ENCODE measurements at regions of chr16 and their contacts with region 1.

Region 1: DNA sequence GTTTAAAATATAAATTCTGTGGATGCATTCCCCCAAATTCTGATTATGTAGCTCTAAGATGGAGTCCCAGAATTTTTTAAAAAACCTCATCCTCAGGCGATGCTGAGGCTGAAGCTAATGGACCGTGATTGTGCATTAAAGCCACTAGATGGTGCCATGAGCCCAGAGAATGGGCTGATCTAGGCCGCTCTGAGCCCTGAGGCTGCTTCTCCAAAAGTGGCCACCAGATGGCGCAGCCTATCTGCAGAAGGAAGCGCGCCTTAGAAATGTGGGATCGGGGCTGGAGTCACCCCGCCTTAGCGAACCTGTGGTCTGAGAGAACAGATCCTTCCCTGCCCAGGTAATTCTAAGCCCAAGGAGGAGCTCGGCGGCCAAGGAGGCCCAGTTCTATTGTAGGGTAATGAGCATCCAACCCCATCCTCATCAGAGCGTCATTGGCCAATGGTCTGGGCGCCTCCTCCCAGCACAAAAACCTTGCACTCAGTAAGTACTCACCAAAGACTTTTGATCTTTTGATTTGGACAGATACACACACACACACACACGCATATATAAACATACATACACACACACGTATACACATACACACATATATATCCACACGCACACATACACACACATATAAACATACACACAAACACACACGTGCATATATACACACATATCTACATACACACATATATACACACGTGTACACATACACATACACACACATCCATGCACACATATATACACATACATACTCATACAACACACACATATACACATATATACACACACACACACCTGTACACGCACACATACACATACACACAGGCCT is 13.7 kb upstream of the MMP2 start:
- DNase-seq: peak; percentile 64 to 79
- ATAC-seq: peak; percentile 83 to 96
- H3K4me3 ChIP-seq: no peak overlapping the region
- H3K27ac ChIP-seq: no peak overlapping the region
- H3K4me1 ChIP-seq: no peaks in the 10 kb centered on the region
- H3K27me3 ChIP-seq: no peaks in the 10 kb centered on the region
- CTCF ChIP-seq: peak; percentile 97 to 100 (median 99)
- POLR2A ChIP-seq: no peak

Region 2: DNA sequence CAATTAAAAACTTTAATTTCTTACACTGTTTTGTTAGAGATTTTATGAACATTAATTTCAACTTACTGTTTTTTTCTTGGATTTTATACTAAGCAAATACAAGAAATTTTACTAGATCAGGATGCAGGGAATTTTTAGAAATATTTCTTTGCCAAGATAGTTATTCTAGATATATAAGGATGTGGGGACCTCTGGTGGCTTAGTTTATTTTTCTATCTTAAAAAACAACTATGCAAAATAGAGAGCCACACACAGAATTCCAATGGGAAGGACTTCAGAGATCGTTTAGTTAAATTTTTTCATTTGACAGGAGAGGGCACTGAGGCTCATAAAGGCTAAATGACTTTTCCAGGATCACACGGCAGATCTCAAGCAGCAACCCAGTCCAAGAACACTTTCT is 78.2 kb after region 1 on chr16:
- in situ Hi-C with region 1: loop called in 3 of 4 experiments (anchors 5 to 10 kb)
- intact Hi-C with region 1: loop called (anchors 1 kb)
- DNase-seq: no peak
- ATAC-seq: no peak
- H3K4me3 ChIP-seq: no peak overlapping the region
- H3K27ac ChIP-seq: no peak overlapping the region
- H3K4me1 ChIP-seq: peaks cover 0 to 4% of the 10 kb centered on the region in 2 donors
- H3K27me3 ChIP-seq: no peaks in the 10 kb centered on the region
- CTCF ChIP-seq: peak in 4 of 5 experiments; percentile 19 to 39 (median 35)
- POLR2A ChIP-seq: no peak

Region 3: DNA sequence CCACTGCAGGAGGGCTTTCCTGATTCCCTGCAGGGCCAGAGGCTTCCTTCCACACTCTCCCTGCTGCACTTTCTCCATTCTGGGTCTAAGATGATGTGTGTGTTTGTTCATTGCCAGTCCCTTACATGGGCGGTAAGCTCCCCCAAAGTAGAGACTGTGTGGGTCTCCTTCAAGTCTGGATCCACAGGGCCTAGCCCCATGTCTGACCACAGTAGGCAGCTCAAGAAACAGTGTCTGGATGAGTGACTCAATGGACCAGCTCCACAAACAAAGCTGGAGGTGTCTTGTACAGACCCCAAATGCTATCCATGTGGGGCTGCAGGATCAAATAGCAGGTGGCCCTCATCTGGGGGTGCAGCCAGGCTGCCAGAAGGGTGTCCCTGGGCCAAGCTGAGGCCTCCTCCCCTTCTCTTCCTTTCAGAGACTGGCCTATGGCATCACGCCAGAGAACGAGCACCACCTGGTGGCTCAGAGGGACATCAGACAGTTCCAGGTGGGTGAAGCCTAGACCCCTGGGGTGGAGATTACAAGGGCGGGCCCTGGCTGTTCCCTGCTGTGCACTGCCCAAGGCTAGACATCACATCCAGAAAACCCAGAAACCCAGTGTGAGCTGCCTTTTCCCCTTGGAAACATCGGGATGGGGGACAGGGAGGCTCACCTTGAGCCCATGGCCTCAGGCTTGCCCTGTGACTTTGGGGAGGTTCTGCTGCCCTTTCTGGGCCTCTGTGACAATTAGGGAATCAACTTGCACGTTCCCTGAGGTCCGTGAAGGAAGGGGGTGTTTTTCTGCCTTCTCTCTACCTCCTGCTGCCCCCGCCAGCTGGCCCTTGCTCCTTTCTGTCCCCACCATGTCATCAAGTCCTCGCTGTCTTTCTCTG is 236.4 kb after region 1 on chr16:
- in situ Hi-C with region 1: loop called (anchors 5 to 10 kb)
- intact Hi-C with region 1: loop called (anchors 1 kb)
- DNase-seq: peak; percentile 7 to 35
- ATAC-seq: peak; percentile 58 to 70
- H3K4me3 ChIP-seq: no peak overlapping the region
- H3K27ac ChIP-seq: no peak overlapping the region
- H3K4me1 ChIP-seq: no peaks in the 10 kb centered on the region
- H3K27me3 ChIP-seq: no peaks in the 10 kb centered on the region
- CTCF ChIP-seq: peak; percentile 57 to 76 (median 68)
- POLR2A ChIP-seq: no peak

Region 4: DNA sequence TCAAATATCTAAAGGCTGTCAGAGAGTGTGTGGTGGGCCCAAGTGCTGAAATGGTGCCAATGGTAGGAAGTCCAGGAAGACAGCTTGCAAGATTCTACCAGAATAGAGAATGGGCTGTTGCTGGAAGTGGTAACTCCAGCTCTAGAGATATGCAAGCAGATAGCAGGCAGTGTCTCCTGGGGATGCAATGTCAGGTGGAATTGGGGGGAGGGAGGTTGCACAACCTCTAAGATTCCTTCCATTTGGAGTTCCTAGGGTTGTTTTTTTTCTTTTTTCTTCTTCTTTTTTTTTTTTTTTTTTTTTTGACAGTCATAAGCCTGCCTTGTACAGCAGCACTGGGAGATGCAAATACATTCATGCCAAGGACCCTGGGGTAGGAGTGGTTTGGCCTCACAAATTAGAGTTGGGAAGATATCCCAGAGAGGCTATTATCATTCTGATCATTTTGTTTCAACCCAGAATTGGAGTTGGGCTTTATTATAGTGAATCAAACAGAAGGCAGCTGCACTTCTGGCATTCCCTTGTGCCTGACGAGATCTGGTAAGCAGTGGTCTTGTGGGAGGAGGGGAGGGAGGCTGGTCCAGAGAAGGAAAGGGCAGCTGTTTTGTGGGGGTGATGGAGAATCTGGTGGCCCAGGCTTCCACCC is 241.6 kb after region 1 on chr16:
- in situ Hi-C with region 1: loop called (anchors 5 to 10 kb)
- intact Hi-C with region 1: loop called (anchors 1 kb)
- DNase-seq: no peak
- ATAC-seq: peak in 1 of 2 donors; percentile 50
- H3K4me3 ChIP-seq: no peak overlapping the region
- H3K27ac ChIP-seq: no peak overlapping the region
- H3K4me1 ChIP-seq: no peaks in the 10 kb centered on the region
- H3K27me3 ChIP-seq: no peaks in the 10 kb centered on the region
- CTCF ChIP-seq: no peak
- POLR2A ChIP-seq: no peak

Region 5: DNA sequence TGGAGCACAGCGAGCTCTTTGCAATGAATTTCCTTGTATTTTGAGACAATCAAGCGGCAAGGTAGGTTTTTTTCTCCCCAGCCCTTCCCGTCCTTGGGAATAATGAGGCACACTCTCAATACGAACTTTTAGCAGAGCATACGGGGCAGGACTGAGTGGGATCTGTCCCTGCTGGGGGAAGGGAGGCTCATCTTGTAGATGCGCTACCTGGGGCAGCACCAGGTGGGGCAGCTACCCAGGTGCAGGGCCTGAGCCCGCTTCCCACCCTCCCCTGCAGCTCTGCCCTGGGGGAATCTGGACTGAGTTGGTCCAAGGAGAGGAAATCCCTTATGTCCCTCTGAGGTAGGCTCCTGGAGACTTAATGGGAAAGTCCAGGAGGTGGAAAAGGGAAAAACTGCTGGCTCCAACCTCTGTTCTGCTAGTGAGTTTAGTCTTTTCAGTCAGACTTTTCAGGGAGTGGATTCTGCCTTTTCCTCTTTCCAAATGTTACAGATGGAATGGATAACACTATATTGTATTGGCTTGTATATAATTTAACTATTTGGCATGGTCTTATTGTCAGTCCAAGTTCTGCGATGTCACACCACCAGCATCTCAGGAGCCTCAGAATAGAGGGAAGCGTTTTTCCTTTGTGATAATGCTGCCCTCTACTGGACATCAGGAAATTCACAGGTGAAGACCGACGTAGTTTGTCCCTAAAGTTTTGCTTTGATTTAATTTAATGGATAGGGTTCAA is 377.2 kb after region 1 on chr16:
- in situ Hi-C with region 1: loop called (anchors 5 to 25 kb)
- intact Hi-C with region 1: loop called (anchors 1 kb)
- DNase-seq: no peak
- ATAC-seq: peak; percentile 55 to 69
- H3K4me3 ChIP-seq: no peak overlapping the region
- H3K27ac ChIP-seq: no peak overlapping the region
- H3K4me1 ChIP-seq: no peaks in the 10 kb centered on the region
- H3K27me3 ChIP-seq: peaks cover 0 to 10% (median 3%) of the 10 kb centered on the region in 3 donors
- CTCF ChIP-seq: peak; percentile 57 to 75 (median 61)
- POLR2A ChIP-seq: no peak